Dendritic cell treated with granulocyte-macrophage colony-stimulating factor and Interleukin-4, amounts not matched to agents 40 ng/mL and 50 ng/mL, for 4 days (primary cell): ENCODE measurements at regions of chr12 and their contacts with region 1.

Region 1: DNA sequence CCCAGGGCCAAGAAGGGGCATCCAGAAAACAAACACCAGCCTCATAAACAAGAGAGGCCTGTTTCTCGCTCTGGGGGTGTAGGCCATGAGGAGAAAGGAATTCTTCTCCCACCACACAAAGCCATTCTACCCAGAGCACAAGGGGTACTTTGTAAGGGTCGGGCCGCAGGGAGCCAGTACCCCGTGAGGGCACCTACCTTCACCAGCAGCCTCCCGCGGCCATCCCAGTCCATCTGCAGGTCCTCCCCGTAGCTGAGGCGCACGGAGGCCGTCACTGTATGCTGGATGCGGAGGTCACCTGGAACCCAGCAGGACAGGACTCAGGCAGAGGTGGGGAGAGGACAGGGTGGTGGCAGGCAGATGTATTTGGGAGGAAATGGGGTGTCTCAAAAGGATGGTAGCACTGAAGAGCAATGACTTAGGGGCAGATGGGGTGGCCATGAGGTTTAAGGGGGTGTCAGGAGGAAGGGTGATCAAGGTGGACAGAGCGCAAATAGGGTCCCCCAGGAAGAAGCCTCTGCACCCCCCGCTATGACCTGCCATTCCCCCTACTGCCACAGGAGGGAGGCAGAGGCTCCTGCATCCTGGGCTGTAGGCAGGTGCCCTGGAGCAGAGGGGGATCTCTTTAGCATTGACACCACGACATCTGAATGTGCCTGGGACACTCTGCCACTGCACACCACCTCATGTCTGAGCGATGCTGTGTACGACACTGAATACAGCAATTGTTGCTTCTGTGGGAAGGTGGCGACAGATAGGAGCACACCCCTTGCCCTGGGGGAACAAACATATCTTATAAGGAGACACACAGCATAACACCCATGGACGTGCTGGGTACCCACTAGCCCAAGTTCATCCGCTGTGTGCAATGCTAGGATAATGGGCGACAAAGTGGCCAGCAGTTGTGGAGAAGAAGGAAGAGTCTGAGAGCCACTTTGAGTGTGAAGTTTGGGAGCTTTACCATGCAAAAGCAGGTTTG is 61.4 kb downstream of the VWF start:
- H3K4me3 Mint-ChIP-seq: no peak overlapping the region
- H3K27ac Mint-ChIP-seq: peak overlapping the region; percentile 67
- H3K4me1 Mint-ChIP-seq: peaks cover 51% of the 10 kb centered on the region
- H3K27me3 Mint-ChIP-seq: peaks cover 40% of the 10 kb centered on the region

Region 2: GRCh38 chr12:6106218-6106617 is 43.2 kb after region 1 on chr12:
- intact Hi-C with region 1: loop called (anchors 5 kb)
- H3K4me3 Mint-ChIP-seq: no peak overlapping the region
- H3K27ac Mint-ChIP-seq: no peak overlapping the region
- H3K4me1 Mint-ChIP-seq: peaks cover 34% of the 10 kb centered on the region
- H3K27me3 Mint-ChIP-seq: peaks cover 14% of the 10 kb centered on the region

Region 3: DNA sequence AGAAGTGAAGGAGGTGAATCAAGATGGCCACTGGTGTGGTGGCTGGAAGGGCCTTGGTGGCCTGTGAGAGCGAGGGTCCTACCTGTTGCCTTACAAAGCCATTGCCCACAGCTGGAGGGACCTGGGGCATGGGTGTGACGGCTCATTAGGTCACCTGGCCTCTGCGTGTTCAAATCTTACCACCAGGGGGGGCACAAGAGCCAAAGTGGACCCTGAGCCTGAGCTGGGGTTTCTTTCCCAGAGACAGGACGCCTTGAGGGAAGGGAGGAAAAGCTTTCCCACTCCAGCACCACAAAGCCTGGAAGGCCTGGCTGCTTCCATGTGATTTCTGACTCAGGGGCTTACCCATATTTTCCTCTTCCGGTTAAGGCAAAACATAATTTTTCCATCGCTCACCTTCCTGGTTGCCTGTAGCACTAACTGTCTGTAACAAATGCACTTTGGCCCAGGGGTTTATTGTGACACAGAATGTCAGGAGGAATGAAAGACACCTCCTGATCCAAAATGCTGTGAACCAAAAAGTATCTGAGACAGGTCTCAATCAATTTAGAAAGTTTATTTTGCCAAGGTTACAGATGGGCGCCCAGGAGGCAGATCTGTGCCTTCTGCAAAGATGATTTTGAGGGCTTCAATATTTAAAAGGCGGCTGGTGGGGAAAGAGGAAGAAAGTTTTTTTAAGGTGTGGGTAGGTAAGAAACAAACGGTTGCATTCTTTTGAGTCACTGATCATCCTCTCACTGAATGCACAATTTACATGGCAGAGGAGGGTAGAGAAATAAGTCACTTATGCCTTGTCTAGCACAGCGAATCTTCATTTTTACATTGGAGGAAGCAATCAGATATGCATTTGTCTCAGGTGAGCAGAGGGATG is 132.9 kb after region 1 on chr12:
- intact Hi-C with region 1: loop called (anchors 5 kb)
- H3K4me3 Mint-ChIP-seq: no peak overlapping the region
- H3K27ac Mint-ChIP-seq: peak overlapping the region; percentile 72
- H3K4me1 Mint-ChIP-seq: peaks cover 65% of the 10 kb centered on the region
- H3K27me3 Mint-ChIP-seq: peaks cover 34% of the 10 kb centered on the region

Region 4: GRCh38 chr12:6278439-6279255 is 215.6 kb after region 1 on chr12:
- intact Hi-C with region 1: loop called (anchors 2 kb)
- H3K4me3 Mint-ChIP-seq: peak overlapping the region; percentile 70
- H3K27ac Mint-ChIP-seq: peak overlapping the region; percentile 88
- H3K4me1 Mint-ChIP-seq: peaks cover 25% of the 10 kb centered on the region
- H3K27me3 Mint-ChIP-seq: peaks cover 66% of the 10 kb centered on the region